PC-3 (cell line): ENCODE measurements at regions of chr2 and their contacts with region 1.

Region 1: GRCh38 chr2:144350151-144350802 is 169.6 kb downstream of the ZEB2 start:
- DNase-seq: peak; percentile 75
- ATAC-seq: peak; percentile 88
- H3K4me3 ChIP-seq: peak overlapping the region; percentile 6; the same call in 1 of the 2 replicates
- H3K27ac ChIP-seq: peak overlapping the region; percentile 47
- H3K4me1 ChIP-seq: peaks cover 19% of the 10 kb centered on the region
- H3K27me3 ChIP-seq: no peaks in the 10 kb centered on the region
- CTCF ChIP-seq: no peak

Region 2: GRCh38 chr2:144389151-144389929 is 39.1 kb after region 1 on chr2:
- CTCF ChIA-PET with region 1: no interaction called
- POLR2A ChIA-PET with region 1: interaction called, 25 read pairs
- intact Hi-C with region 1: no loop called
- DNase-seq: peak; percentile 48
- ATAC-seq: peak; percentile 88
- H3K4me3 ChIP-seq: peak overlapping the region; percentile 72
- H3K27ac ChIP-seq: no peak overlapping the region
- H3K4me1 ChIP-seq: peaks cover 12% of the 10 kb centered on the region; the same call in 1 of the 2 replicates
- H3K27me3 ChIP-seq: no peaks in the 10 kb centered on the region
- CTCF ChIP-seq: no peak

Region 3: GRCh38 chr2:144686518-144687215 is 336.4 kb after region 1 on chr2:
- CTCF ChIA-PET with region 1: no interaction called
- POLR2A ChIA-PET with region 1: interaction called, 12 read pairs
- intact Hi-C with region 1: no loop called
- DNase-seq: no peak
- ATAC-seq: no peak
- H3K4me3 ChIP-seq: no peak overlapping the region
- H3K27ac ChIP-seq: no peak overlapping the region
- H3K4me1 ChIP-seq: no peaks in the 10 kb centered on the region
- H3K27me3 ChIP-seq: no peaks in the 10 kb centered on the region
- CTCF ChIP-seq: no peak